ENCODE measurements at regions of chrX and their contacts with region 1.

Region 1: DNA sequence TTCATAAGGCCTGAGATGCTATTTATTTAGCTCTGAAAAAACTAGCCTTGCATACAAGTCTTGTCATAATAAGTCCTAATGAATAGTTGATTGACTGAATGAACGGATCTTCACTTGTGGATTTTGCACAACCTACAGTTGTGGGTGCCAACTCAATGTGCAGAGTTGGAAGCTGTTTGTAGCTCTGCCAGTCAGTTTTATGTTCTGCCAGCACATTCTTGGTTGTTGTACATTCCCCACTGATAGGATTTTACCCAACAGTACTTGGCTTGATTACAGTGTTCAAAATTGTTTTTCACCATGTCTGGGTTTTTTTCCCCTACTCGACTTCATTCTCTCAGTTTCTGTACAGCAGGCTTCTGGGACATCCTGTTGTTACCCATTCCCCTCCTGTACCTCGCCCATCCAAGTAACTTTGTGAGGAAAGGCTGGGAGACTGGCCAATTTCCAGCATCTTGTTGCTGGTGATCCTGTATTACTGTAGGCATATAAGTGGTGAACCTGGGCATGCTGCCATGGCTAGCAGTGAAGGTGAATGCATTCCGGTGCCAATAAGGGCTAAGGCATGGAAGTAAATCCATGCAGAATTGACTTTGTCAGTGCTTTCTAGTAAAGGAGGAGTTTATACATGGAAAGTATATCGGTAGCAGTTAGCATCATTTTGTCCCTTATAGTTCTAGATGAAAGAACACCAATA is 22.8 kb downstream of the IL1RAPL1 start:
- DNase-seq: no peak
- ATAC-seq: no peak
- H3K4me3 ChIP-seq: no peak overlapping the region
- H3K27ac ChIP-seq: no peak overlapping the region
- H3K4me1 ChIP-seq: peaks cover 6 to 10% of the 10 kb centered on the region in 2 experiments; a peak in 2 of 4 replicates
- H3K27me3 ChIP-seq: no peaks in the 10 kb centered on the region
- CTCF ChIP-seq: no peak
- POLR2A ChIP-seq: no peak
- RAD21 ChIP-seq: no peak

Region 2: GRCh38 chrX:28225508-28225907 is 384.6 kb before region 1 on chrX:
- CTCF ChIA-PET with region 1: no interaction called
- POLR2A ChIA-PET with region 1: no interaction called
- RAD21 ChIA-PET with region 1: no interaction called
- intact Hi-C with region 1: no loop called
- DNase-seq: peak; percentile 0
- ATAC-seq: no peak
- H3K4me3 ChIP-seq: no peak overlapping the region
- H3K27ac ChIP-seq: no peak overlapping the region
- H3K4me1 ChIP-seq: peaks cover 0 to 3% of the 10 kb centered on the region in 2 experiments; a peak in 1 of 4 replicates
- H3K27me3 ChIP-seq: no peaks in the 10 kb centered on the region
- CTCF ChIP-seq: no peak
- POLR2A ChIP-seq: no peak
- RAD21 ChIP-seq: no peak

Region 3: DNA sequence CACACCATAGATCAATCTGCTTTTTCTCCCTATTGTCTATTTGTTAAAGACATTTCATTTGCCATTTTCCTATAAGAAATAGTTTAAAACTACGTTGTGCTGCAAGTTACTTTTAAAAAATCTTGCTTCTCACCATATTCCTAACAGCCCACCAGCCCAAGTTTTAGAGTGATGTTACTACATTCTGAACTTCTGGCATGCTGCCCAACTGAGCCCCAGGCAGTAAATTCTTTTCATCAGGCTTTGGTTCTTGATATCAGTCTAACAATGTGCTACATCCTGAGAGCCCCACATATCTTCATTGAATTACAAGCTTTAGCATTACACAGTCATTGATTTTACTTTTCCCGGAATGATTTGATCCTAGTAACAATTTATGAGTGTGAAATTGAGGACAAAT is 306.6 kb before region 1 on chrX:
- CTCF ChIA-PET with region 1: no interaction called
- POLR2A ChIA-PET with region 1: no interaction called
- RAD21 ChIA-PET with region 1: no interaction called
- intact Hi-C with region 1: no loop called
- DNase-seq: no peak
- ATAC-seq: no peak
- H3K4me3 ChIP-seq: no peak overlapping the region
- H3K27ac ChIP-seq: no peak overlapping the region
- H3K4me1 ChIP-seq: no peaks in the 10 kb centered on the region
- H3K27me3 ChIP-seq: no peaks in the 10 kb centered on the region
- CTCF ChIP-seq: no peak
- POLR2A ChIP-seq: no peak
- RAD21 ChIP-seq: no peak

Region 4: DNA sequence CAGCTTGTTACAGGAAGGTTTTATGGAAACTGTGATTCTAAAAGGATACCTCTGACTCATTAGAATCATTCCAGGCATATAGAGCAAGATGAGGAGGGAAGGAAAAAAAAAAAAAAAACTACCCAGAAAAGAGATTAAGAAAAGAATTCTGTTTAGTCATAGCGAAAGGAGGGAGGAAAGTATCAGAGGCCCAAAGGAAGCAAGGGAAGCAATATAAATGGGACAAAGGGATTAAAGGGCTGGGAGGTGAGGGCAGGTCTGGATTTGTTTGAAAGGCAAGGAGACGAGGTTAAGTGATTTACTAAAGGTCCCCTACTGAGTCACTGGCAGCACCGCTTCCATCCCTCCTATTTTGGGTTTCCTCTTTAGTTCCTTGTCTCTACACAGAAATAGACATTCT is 111.4 kb before region 1 on chrX:
- CTCF ChIA-PET with region 1: no interaction called
- POLR2A ChIA-PET with region 1: no interaction called
- RAD21 ChIA-PET with region 1: no interaction called
- intact Hi-C with region 1: no loop called
- DNase-seq: peak; percentile 85
- ATAC-seq: peak; percentile 77
- H3K4me3 ChIP-seq: peak overlapping the region in 1 of 2 experiments; percentile 6; a peak in 1 of 4 replicates
- H3K27ac ChIP-seq: peak overlapping the region; percentile 96
- H3K4me1 ChIP-seq: peaks cover 61 to 82% of the 10 kb centered on the region in 2 experiments
- H3K27me3 ChIP-seq: no peaks in the 10 kb centered on the region
- CTCF ChIP-seq: no peak
- POLR2A ChIP-seq: no peak
- RAD21 ChIP-seq: no peak

Region 5: DNA sequence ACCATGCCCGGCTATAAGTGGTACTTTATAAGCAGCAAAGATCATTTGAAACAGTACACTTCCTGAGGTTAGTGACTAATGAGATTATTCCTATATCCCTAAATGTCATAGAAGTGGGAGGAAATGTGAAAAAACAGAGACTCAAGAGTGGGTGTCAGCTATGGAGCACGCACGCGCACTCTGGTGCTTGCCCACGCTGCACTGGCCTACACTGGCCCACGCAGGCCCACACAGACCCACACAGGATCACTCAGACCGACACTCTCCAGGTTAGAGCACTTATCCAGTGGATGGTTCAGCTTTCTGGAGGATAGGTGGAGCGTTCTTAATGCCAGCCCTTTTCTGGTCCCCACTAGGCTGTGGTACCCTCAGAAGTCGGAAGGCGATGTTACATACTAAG is 55.7 kb after region 1 on chrX:
- CTCF ChIA-PET with region 1: no interaction called
- POLR2A ChIA-PET with region 1: no interaction called
- RAD21 ChIA-PET with region 1: no interaction called
- intact Hi-C with region 1: loop called (anchors 10 kb)
- DNase-seq: no peak
- ATAC-seq: no peak
- H3K4me3 ChIP-seq: no peak overlapping the region
- H3K27ac ChIP-seq: no peak overlapping the region
- H3K4me1 ChIP-seq: peaks cover 2 to 10% of the 10 kb centered on the region in 2 experiments; a peak in 3 of 4 replicates
- H3K27me3 ChIP-seq: no peaks in the 10 kb centered on the region
- CTCF ChIP-seq: no peak
- POLR2A ChIP-seq: no peak
- RAD21 ChIP-seq: no peak

Region 6: DNA sequence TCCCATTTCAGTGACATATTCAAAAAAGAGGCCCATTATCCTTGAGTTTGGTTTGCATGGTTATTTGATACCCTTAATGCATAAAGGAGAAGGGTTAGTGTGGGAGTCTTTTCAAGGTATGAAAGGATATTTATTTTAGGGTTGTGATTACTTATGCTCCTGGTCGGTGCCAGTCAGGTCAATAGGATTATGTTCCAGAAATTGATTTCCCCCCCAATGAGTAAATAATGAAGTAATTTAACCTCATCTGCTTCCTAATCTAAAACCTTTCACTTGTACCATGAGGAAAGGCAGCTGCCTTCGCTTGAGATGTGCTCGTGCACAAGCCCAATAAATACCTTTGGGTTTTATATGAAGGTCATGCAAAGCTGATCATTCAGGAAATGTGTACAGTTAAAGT is 1754.2 kb after region 1 on chrX:
- CTCF ChIA-PET with region 1: no interaction called
- POLR2A ChIA-PET with region 1: no interaction called
- RAD21 ChIA-PET with region 1: no interaction called
- intact Hi-C with region 1: no loop called
- DNase-seq: no peak
- ATAC-seq: no peak
- H3K4me3 ChIP-seq: no peak overlapping the region
- H3K27ac ChIP-seq: no peak overlapping the region
- H3K4me1 ChIP-seq: no peaks in the 10 kb centered on the region
- H3K27me3 ChIP-seq: no peaks in the 10 kb centered on the region
- CTCF ChIP-seq: no peak
- POLR2A ChIP-seq: no peak
- RAD21 ChIP-seq: no peak

Measured in HCT116 (cell line).